ENCODE measurements at regions of chr7 and their contacts with region 1.

Region 1: GRCh38 chr7:50266635-50267386 is 37.7 kb upstream of the IKZF1 start:
- DNase-seq: peak; percentile 44 to 90 (median 76)
- ATAC-seq: peak; percentile 79 to 87
- H3K4me3 Mint-ChIP-seq: peak overlapping the region; percentile 77 to 91 (median 86)
- H3K27ac Mint-ChIP-seq: peak overlapping the region; percentile 88 to 99 (median 96)
- H3K4me1 Mint-ChIP-seq: peaks cover 60 to 99% (median 91%) of the 10 kb centered on the region in 4 donors
- H3K27me3 Mint-ChIP-seq: no peaks in the 10 kb centered on the region

Region 2: GRCh38 chr7:50206453-50207250 is 60.2 kb before region 1 on chr7:
- POLR2A ChIA-PET with region 1: interaction called, 78 read pairs
- DNase-seq: peak; percentile 34 to 91 (median 71)
- ATAC-seq: peak; percentile 74 to 83
- H3K4me3 Mint-ChIP-seq: peak overlapping the region; percentile 72 to 88 (median 84)
- H3K27ac Mint-ChIP-seq: peak overlapping the region; percentile 93 to 100 (median 96)
- H3K4me1 Mint-ChIP-seq: peaks cover 53 to 81% (median 76%) of the 10 kb centered on the region in 4 donors
- H3K27me3 Mint-ChIP-seq: no peaks in the 10 kb centered on the region

Region 3: GRCh38 chr7:50229964-50230363 is 36.8 kb before region 1 on chr7:
- POLR2A ChIA-PET with region 1: interaction called, 18 read pairs
- DNase-seq: peak in 2 of 10 donors; percentile 23 to 25
- ATAC-seq: no peak
- H3K4me3 Mint-ChIP-seq: no peak overlapping the region
- H3K27ac Mint-ChIP-seq: no peak overlapping the region
- H3K4me1 Mint-ChIP-seq: peaks cover 20 to 40% (median 37%) of the 10 kb centered on the region in 4 donors
- H3K27me3 Mint-ChIP-seq: no peaks in the 10 kb centered on the region

Region 4: GRCh38 chr7:50281680-50282445 is 15.1 kb after region 1 on chr7:
- POLR2A ChIA-PET with region 1: interaction called, 36 read pairs
- DNase-seq: peak in 5 of 10 donors; percentile 35 to 54 (median 42)
- ATAC-seq: peak; percentile 84 to 94
- H3K4me3 Mint-ChIP-seq: peak overlapping the region; percentile 60 to 90 (median 82)
- H3K27ac Mint-ChIP-seq: peak overlapping the region; percentile 84 to 99 (median 94)
- H3K4me1 Mint-ChIP-seq: peaks cover 28 to 83% (median 74%) of the 10 kb centered on the region in 4 donors
- H3K27me3 Mint-ChIP-seq: no peaks in the 10 kb centered on the region

Region 5: DNA sequence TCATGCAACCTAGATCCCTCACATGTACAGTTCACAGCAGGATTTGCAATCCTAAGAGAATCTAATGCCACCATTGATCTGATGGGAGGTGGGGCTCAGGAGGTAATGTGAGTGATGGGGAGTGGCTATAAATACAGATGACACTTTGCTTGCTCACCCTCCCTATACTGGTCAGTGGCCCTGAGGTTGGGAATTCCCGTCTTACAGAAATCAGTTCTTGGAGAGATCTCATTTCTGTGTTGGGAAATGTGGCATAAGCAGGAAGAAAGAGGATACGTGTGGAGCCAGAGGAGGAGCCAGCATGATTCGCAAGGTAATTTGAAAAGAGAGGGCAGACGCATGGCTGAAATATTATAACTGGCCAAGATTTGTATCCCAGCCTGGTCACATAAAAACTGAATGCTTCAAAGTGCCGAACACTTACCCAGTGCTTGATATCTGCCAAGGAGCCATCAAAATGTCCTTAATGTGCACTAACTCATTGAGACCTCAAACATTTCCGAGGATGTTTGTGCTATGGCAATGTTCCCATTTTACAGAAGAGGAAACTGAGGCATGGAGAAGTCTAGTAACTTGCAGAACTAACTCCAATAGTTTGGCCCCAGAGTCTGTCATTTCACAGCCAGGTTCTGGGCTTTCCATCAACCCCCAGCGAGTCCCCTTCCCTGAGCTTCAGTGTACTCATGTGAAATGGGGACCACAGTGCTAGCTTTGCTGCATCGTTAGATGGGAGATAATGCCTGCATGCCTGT is 32.2 kb after region 1 on chr7:
- POLR2A ChIA-PET with region 1: interaction called, 295 read pairs
- DNase-seq: no peak
- ATAC-seq: no peak
- H3K4me3 Mint-ChIP-seq: peak overlapping the region in 1 of 10 donors; percentile 37
- H3K27ac Mint-ChIP-seq: peak overlapping the region in 8 of 10 donors; percentile 32 to 93 (median 85)
- H3K4me1 Mint-ChIP-seq: peaks cover 34 to 68% (median 59%) of the 10 kb centered on the region in 4 donors
- H3K27me3 Mint-ChIP-seq: no peaks in the 10 kb centered on the region

Region 6: GRCh38 chr7:50317221-50317678 is 50.4 kb after region 1 on chr7:
- POLR2A ChIA-PET with region 1: interaction called, 295 read pairs
- DNase-seq: peak in 9 of 10 donors; percentile 43 to 89 (median 69)
- ATAC-seq: peak; percentile 66 to 80
- H3K4me3 Mint-ChIP-seq: peak overlapping the region; percentile 81 to 100 (median 100)
- H3K27ac Mint-ChIP-seq: peak overlapping the region in 9 of 10 donors; percentile 91 to 100 (median 99)
- H3K4me1 Mint-ChIP-seq: peaks cover 42 to 99% (median 94%) of the 10 kb centered on the region in 4 donors
- H3K27me3 Mint-ChIP-seq: no peaks in the 10 kb centered on the region

Region 7: DNA sequence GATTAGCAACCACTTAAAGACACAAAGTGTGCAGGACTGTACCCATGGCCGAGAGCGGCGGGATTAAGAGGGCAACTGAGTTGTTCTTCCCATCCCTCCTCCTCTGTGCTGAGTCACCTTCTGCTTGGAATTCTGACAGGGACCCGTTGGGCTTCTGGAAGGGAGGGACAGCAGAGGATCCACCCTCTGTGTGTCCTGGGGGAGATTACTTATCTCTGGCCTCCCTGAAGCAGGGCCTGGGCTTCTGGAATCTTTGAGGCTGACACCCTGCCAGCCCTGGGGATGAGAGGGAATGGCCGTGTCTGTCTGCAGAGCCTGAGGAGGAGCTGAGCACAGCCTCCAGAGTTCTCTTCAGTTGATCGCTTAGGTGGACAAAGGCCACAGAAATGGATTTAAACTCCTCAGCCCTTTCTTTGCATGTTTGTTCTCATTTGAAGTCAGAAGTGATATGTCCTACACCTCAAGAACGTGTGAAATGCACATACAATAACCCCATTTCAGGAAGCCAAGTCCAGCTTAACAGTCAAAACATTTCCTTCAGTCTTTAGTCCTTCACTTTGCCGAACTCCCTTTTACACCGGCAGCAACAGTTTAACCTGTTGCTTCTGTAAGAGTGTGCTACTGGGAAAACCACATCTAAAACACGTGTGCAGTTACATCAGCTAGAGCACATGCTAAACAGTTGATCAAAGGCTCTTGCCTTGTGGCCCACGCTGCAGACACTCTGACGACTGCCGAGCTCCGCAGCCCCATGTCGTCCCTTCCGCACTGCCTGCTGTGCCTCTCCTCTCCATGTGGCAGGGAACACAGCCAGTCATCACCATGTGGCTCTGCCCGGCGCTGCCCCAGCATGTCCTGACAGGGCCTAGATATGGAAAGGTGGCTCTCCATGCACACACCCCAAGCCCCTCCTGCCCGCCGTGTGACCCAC is 93.4 kb after region 1 on chr7:
- POLR2A ChIA-PET with region 1: interaction called, 39 read pairs
- DNase-seq: peak; percentile 66 to 93 (median 86)
- ATAC-seq: peak; percentile 84 to 92
- H3K4me3 Mint-ChIP-seq: peak overlapping the region; percentile 54 to 86 (median 80)
- H3K27ac Mint-ChIP-seq: peak overlapping the region in 9 of 10 donors; percentile 96 to 100 (median 100)
- H3K4me1 Mint-ChIP-seq: peaks cover 66 to 99% (median 98%) of the 10 kb centered on the region in 4 donors
- H3K27me3 Mint-ChIP-seq: no peaks in the 10 kb centered on the region